Testis (tissue), 5 donors: ENCODE measurements at regions of chr1 and their contacts with region 1.

Region 1: DNA sequence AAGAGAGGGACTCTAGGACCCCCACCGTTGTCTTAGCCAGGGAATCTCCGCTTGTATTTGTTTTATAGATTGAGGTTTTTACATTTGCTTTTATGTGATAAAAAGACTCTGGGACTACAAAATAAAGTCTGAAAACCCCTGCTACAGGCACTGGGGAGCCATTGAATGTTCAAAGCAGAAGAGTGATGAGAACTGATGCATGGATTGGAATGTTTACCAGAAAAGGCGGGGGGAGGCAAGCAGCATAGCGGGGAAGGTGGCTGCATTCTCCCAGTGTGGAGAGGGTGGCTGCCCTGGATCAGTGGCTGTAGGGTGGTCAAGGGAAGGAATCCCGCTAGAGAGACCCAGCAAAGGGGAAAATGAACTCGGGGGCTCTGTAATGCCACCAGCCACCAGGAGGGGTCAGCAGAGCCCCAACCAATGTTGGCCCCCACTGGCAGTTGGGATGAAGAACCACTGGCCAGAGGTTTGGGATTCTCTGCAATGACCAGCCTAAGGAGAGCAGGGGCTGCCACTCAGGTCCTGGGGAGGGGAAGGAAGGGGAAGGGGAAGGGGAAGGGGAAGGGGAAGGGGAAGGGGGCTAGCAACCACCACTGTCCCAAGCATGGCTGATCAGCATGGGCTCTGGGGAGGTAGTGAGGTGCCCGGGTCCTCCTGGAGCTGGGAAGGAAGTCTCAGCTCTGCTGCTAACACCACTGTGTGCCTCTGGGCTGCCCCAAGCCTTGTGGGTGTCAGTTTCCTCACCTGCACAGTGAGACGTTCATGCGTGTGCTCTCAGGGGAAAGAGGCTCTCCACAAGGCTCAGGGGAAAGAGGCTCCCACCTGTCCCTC is 19.2 kb upstream of the PEF1 start:
- DNase-seq: peak; percentile 57
- H3K4me3 ChIP-seq: no peak overlapping the region
- H3K27ac ChIP-seq: no peak overlapping the region
- H3K4me1 ChIP-seq: peaks cover 37% of the 10 kb centered on the region
- H3K27me3 ChIP-seq: no peaks in the 10 kb centered on the region
- CTCF ChIP-seq: peak; percentile 90 to 93 (median 91)
- POLR2A ChIP-seq: no peak

Region 2: GRCh38 chr1:31354283-31354682 is 309.6 kb before region 1 on chr1:
- intact Hi-C with region 1: no loop called
- DNase-seq: no peak
- H3K4me3 ChIP-seq: no peak overlapping the region
- H3K27ac ChIP-seq: no peak overlapping the region
- H3K4me1 ChIP-seq: no peaks in the 10 kb centered on the region
- H3K27me3 ChIP-seq: no peaks in the 10 kb centered on the region
- CTCF ChIP-seq: no peak
- POLR2A ChIP-seq: no peak

Region 3: GRCh38 chr1:31789259-31790065 is 125.6 kb after region 1 on chr1:
- intact Hi-C with region 1: loop called (anchors 10 kb)
- DNase-seq: peak; percentile 97
- H3K4me3 ChIP-seq: peak overlapping the region; percentile 63 to 65
- H3K27ac ChIP-seq: peak overlapping the region; percentile 74 to 75
- H3K4me1 ChIP-seq: no peaks in the 10 kb centered on the region
- H3K27me3 ChIP-seq: no peaks in the 10 kb centered on the region
- CTCF ChIP-seq: peak; percentile 85 to 95 (median 93)
- POLR2A ChIP-seq: no peak